Calu3 (cell line): ENCODE measurements at regions of chr14 and their contacts with region 1.

Region 1: DNA sequence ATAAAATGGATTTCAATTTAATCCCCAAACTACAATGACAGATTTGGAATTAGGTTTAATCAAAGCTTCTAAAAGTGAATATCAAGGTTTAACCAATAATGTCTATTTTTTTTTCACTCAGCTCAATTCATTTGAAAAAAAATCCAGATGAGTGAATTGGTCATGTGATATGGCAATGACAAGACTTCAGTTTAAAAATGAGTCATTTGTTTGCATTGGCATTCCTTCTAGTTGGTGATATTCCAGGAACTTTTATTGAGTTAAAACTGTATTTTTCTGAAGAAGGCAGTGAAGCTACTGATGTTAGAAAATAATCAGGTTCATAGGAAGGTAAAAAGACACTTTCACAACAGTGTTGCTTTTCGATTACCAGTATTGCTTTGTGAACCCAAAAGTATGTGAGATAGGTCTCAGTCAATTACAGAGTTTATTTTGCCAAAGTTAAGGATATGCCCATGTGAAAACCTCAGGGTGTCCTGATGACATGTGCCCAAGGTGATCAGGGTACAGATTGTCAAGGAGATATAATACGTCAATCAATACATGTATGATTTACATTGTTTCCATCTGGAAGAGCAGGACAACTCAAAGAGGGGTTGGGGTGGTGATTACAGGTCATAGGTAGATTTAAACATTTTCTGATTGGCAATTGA is 1214.9 kb downstream of the GALC start:
- DNase-seq: no peak
- H3K4me3 Mint-ChIP-seq: peak overlapping the region; percentile 15
- H3K27ac Mint-ChIP-seq: peak overlapping the region; percentile 82
- H3K4me1 Mint-ChIP-seq: peaks cover 45% of the 10 kb centered on the region
- H3K27me3 Mint-ChIP-seq: no peaks in the 10 kb centered on the region
- CTCF ChIP-seq: no peak

Region 2: DNA sequence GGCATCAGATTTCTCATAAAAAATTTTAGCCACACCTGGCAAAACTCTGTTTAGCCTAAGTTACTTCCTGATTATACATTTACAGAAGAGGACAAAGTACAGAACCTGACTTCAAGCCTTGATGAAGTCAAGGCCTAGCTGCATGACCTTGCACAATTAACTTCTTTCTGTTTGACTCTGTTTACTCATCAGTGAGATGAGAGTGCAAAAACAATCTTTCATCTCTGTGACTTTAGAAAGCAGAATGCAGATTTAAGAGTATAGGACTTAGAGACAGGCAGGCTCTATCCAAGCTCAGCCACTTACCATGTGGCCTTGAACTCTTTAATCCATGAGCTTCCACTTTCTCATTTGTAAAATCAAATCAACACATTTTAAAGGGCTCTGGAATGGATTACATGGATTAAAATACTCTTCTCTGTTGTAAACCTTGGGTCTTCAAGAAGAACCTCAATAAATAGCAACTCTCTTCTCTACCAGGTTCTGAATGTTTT is 69.2 kb before region 1 on chr14:
- CTCF ChIA-PET with region 1: no interaction called
- intact Hi-C with region 1: loop called (anchors 5 kb)
- DNase-seq: no peak
- H3K4me3 Mint-ChIP-seq: peak overlapping the region; percentile 39
- H3K27ac Mint-ChIP-seq: peak overlapping the region; percentile 59
- H3K4me1 Mint-ChIP-seq: peaks cover 40% of the 10 kb centered on the region
- H3K27me3 Mint-ChIP-seq: no peaks in the 10 kb centered on the region
- CTCF ChIP-seq: no peak

Region 3: DNA sequence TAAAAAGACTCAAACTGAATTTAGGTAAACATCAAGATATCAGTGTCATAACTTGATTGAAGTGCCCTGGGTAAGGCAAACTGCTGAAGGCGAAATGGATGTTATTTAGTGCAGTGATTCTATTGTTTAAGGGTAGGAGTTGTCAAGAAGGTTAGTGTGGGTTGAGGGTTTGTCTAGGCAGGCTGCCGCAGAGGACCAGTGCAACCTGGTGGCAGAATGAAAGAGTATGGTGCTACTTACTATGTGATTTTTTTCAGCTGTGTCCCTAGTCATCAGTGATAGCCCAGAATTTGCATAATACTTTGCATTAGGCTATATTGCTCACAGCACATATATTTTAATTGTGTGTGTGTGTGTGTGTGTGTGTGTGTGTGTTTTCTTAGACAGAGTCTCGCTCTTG is 87.9 kb after region 1 on chr14:
- CTCF ChIA-PET with region 1: no interaction called
- intact Hi-C with region 1: loop called (anchors 5 kb)
- DNase-seq: no peak
- H3K4me3 Mint-ChIP-seq: no peak overlapping the region
- H3K27ac Mint-ChIP-seq: no peak overlapping the region
- H3K4me1 Mint-ChIP-seq: peaks cover 16% of the 10 kb centered on the region
- H3K27me3 Mint-ChIP-seq: no peaks in the 10 kb centered on the region
- CTCF ChIP-seq: no peak